Tibial artery (tissue), 4 donors: ENCODE measurements at regions of chr15 and their contacts with region 1.

Region 1: DNA sequence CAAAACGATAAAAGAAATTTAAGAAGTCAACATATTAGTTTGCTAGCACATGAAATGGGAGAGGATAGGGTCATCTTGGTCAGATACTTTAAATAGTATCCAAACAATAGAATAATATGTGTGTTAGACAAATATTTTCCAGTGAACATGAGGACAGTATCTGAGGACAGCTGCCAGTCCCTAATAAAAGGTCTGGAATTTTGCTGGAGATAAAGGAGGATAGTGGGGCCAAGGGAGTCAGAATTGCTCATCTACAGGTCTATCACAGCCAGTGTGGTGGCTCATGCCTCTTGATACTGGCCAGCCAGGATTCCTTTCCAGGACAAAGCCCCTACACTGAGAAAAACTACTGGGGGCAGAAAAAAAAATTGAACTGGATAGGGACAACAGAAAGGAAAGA is 74.0 kb downstream of the HERC1 start:
- DNase-seq: no peak
- H3K4me3 ChIP-seq: no peak overlapping the region
- H3K27ac ChIP-seq: no peak overlapping the region
- H3K4me1 ChIP-seq: peaks cover 0 to 8% (median 2%) of the 10 kb centered on the region in 4 donors
- H3K27me3 ChIP-seq: no peaks in the 10 kb centered on the region
- CTCF ChIP-seq: no peak

Region 2: GRCh38 chr15:63887630-63888029 is 127.9 kb after region 1 on chr15:
- intact Hi-C with region 1: loop called (anchors 5 kb)
- DNase-seq: peak in 1 of 2 donors; percentile 29
- H3K4me3 ChIP-seq: no peak overlapping the region
- H3K27ac ChIP-seq: no peak overlapping the region
- H3K4me1 ChIP-seq: no peaks in the 10 kb centered on the region
- H3K27me3 ChIP-seq: no peaks in the 10 kb centered on the region
- CTCF ChIP-seq: no peak

Region 3: DNA sequence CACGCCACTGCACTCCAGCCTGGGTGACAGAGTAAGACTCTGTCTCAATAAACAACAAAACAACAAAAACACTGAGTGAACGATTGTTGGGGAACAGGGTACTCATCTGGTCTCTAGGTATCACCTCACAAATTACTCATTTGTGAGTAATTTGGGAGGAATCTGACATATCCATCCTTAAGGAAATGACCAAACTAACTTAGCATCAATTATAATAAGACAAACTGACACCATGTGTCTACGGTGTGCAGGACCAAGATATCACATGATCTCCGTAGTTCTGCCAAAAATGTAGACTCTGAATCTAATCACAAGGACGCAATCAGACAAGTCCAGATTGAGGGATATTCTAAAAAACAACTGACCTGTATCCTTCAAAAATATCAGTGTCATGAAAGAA is 298.5 kb after region 1 on chr15:
- intact Hi-C with region 1: no loop called
- DNase-seq: no peak
- H3K4me3 ChIP-seq: no peak overlapping the region
- H3K27ac ChIP-seq: no peak overlapping the region
- H3K4me1 ChIP-seq: no peaks in the 10 kb centered on the region
- H3K27me3 ChIP-seq: no peaks in the 10 kb centered on the region
- CTCF ChIP-seq: no peak